Stomach (tissue), 19 donors: ENCODE measurements at regions of chr19 and their contacts with region 1.

Region 1: GRCh38 chr19:53195265-53195903 is 2.2 kb upstream of the ZNF665 start:
- DNase-seq: peak; percentile 86 to 95
- H3K4me3 ChIP-seq: no peak overlapping the region
- H3K27ac ChIP-seq: peak overlapping the region in 2 of 5 donors; percentile 48 to 55
- H3K4me1 ChIP-seq: peaks cover 4 to 35% (median 26%) of the 10 kb centered on the region in 4 donors
- H3K27me3 ChIP-seq: no peaks in the 10 kb centered on the region
- CTCF ChIP-seq: peak in 5 of 7 experiments; percentile 82 to 96 (median 90)
- EP300 ChIP-seq: no peak
- POLR2A ChIP-seq: no peak

Region 2: DNA sequence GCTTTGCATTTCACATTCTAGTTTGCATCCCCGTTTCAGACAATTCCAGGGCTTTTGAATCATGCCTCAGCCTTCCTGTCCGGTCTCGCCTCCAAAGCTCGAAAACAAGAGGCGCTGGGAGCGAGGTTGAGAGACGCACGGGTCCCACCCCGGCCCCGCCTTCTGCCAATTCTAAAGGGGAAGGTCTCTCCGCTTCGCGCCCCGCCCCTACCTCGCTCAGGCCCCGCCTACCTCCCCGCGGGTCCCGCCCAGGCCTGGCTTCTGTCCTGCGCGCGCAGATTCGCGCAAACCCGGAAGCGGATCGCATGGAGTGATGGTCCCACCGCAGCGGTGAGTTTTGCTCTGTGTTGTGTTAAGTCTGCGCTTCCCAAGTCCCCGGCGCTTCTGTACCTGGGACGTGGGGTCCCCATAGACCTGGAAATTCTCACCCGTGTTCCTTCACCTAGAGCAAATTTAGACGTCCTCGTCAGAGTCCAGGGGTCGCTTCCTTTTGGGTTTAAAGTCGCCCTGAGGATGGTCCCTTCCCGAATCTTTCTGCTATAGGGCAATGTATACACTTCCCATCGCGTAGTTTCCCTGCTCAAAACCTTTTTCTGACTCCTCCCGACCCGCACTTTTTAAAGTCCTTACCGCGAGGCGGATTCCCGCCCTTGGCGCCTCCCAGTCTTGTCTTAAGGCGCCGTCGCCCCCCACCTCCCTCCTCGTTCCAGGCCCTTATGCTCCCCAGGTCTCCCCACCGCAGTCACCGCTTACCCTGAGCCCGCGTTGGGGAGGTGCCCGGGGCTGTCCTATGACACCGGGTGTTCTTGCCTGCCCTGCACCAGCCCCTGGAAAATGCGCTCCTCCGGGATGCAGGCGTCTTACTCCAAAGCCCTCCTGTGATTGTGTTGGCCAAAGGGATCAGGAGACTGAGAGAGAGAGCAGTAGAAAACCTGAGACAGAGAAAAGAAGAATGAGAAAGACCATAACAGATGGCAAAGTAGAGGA is 138.4 kb after region 1 on chr19 and contains the start of gene ZNF845:
- intact Hi-C with region 1: loop called (anchors 10 kb)
- DNase-seq: peak; percentile 97 to 98
- H3K4me3 ChIP-seq: peak within 1 kb of the TSS; percentile 68 to 87 (median 70)
- H3K27ac ChIP-seq: peak within 1 kb of the TSS; percentile 75 to 83 (median 79)
- H3K4me1 ChIP-seq: peaks cover 0 to 28% (median 17%) of the 10 kb centered on the region in 4 donors
- H3K27me3 ChIP-seq: peaks cover 0 to 4% (median 0%) of the 10 kb centered on the region in 3 donors
- CTCF ChIP-seq: no peak
- EP300 ChIP-seq: no peak
- POLR2A ChIP-seq: no peak
- total RNA-seq, gene ZNF845: 1.2 to 28.6 (median 10.8) TPM

Region 3: GRCh38 chr19:53365134-53365898 is 169.9 kb after region 1 on chr19 and contains the start of gene ZNF525:
- intact Hi-C with region 1: loop called (anchors 10 kb)
- DNase-seq: peak; percentile 97
- H3K4me3 ChIP-seq: peak within 1 kb of the TSS; percentile 66 to 87 (median 70)
- H3K27ac ChIP-seq: peak within 1 kb of the TSS; percentile 76 to 85 (median 82)
- H3K4me1 ChIP-seq: peaks cover 0 to 18% (median 15%) of the 10 kb centered on the region in 4 donors
- H3K27me3 ChIP-seq: no peaks in the 10 kb centered on the region
- CTCF ChIP-seq: peak in 4 of 7 experiments; percentile 13 to 54 (median 26)
- EP300 ChIP-seq: no peak
- POLR2A ChIP-seq: peak in 1 of 4 donors; percentile 47
- total RNA-seq, gene ZNF525: 3.6 to 33.3 (median 10.4) TPM

Region 4: GRCh38 chr19:53511933-53512374 is 316.6 kb after region 1 on chr19:
- intact Hi-C with region 1: loop called (anchors 10 kb)
- DNase-seq: peak; percentile 64 to 85
- H3K4me3 ChIP-seq: no peak overlapping the region
- H3K27ac ChIP-seq: no peak overlapping the region
- H3K4me1 ChIP-seq: no peaks in the 10 kb centered on the region
- H3K27me3 ChIP-seq: peaks cover 0 to 16% (median 0%) of the 10 kb centered on the region in 3 donors
- CTCF ChIP-seq: peak in 5 of 7 experiments; percentile 55 to 68 (median 60)
- EP300 ChIP-seq: no peak
- POLR2A ChIP-seq: no peak